ENCODE measurements at regions of chr11 and their contacts with region 1.

Region 1: DNA sequence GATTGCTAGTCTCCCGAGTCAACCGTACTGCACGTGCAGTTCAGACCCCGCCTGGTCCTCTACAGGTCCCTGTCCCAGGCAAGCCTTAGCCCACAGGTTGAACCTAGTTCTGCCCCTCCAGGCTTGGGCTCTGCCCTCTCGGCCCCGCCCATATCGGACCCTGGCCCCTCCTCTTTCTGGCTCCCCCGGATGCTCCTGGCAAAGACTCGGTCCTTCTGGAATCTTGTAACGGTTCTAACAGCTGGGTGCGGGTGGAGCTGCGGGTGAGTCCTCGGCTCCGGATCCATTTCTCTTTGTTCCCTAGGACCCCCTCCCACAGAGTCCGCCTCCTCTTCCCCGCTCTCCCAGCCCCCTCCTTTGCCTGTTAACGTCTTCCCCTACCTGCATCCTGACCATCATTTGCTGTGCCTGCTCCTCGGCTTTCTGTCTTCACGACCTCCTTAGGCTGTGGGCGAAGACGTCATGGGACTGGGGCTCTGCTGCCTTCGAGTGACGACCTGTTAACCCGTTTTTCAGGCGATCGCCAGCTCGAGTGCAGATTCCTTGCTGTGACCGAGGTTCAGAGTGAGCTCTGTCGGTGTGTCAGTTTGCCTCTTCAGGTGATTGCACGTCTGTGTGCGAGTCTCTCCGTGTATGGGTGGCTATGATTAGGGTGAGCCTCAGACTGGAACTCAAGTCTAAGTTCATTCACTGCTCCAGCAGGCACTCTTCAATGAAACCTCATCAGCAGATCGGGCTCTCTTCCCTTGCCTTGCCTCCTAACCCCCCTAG is at the start of gene DNHD1:
- DNase-seq: no peak
- H3K4me3 ChIP-seq: peak within 1 kb of the TSS in 1 of 4 donors; percentile 10
- H3K27ac ChIP-seq: no peak within 1 kb of the TSS
- H3K4me1 ChIP-seq: peaks cover 0 to 16% (median 0%) of the 10 kb centered on the region in 3 donors
- H3K27me3 ChIP-seq: no peaks in the 10 kb centered on the region
- CTCF ChIP-seq: no peak
- POLR2A ChIP-seq: no peak
- total RNA-seq, gene DNHD1: 1.3 to 11.8 (median 7.7) TPM

Region 2: GRCh38 chr11:6229911-6230310 is 267.3 kb before region 1 on chr11:
- intact Hi-C with region 1: loop called (anchors 10 kb)
- DNase-seq: no peak
- H3K4me3 ChIP-seq: no peak overlapping the region
- H3K27ac ChIP-seq: no peak overlapping the region
- H3K4me1 ChIP-seq: peaks cover 11 to 51% (median 11%) of the 10 kb centered on the region in 3 donors
- H3K27me3 ChIP-seq: no peaks in the 10 kb centered on the region
- CTCF ChIP-seq: no peak
- POLR2A ChIP-seq: no peak

Measured in esophagus squamous epithelium (tissue), 5 donors.